B cell (primary cell): ENCODE measurements at regions of chr4 and their contacts with region 1.

Region 1: GRCh38 chr4:70927502-70928137 is 25.5 kb downstream of the MOB1B start:
- DNase-seq: peak; percentile 72
- ATAC-seq: peak; percentile 61
- H3K4me3 ChIP-seq: peak overlapping the region in 1 of 5 experiments; percentile 13
- H3K4me3 Mint-ChIP-seq: peak overlapping the region; percentile 61
- H3K27ac ChIP-seq: peak overlapping the region; percentile 55 to 67
- H3K27ac Mint-ChIP-seq: peak overlapping the region; percentile 72
- H3K4me1 ChIP-seq: peaks cover 40 to 47% of the 10 kb centered on the region in 2 donors
- H3K4me1 Mint-ChIP-seq: peaks cover 52% of the 10 kb centered on the region
- H3K27me3 ChIP-seq: no peaks in the 10 kb centered on the region
- H3K27me3 Mint-ChIP-seq: no peaks in the 10 kb centered on the region
- CTCF ChIP-seq: peak; percentile 19

Region 2: GRCh38 chr4:70945046-70945445 is 17.4 kb after region 1 on chr4:
- CTCF ChIA-PET with region 1: interaction called, 4 read pairs
- POLR2A ChIA-PET with region 1: interaction called, 4 read pairs
- intact Hi-C with region 1: loop called (anchors 2 kb)
- DNase-seq: peak; percentile 20
- ATAC-seq: no peak
- H3K4me3 ChIP-seq: no peak overlapping the region
- H3K4me3 Mint-ChIP-seq: no peak overlapping the region
- H3K27ac ChIP-seq: peak overlapping the region in 1 of 2 donors; percentile 44
- H3K27ac Mint-ChIP-seq: peak overlapping the region; percentile 6
- H3K4me1 ChIP-seq: peaks cover 19 to 27% of the 10 kb centered on the region in 2 donors
- H3K4me1 Mint-ChIP-seq: peaks cover 37% of the 10 kb centered on the region
- H3K27me3 ChIP-seq: no peaks in the 10 kb centered on the region
- H3K27me3 Mint-ChIP-seq: no peaks in the 10 kb centered on the region
- CTCF ChIP-seq: no peak